Posterior vena cava (tissue), 2 donors: ENCODE measurements at regions of chr19 and their contacts with region 1.

Region 1: GRCh38 chr19:45423589-45424190 is at the start of gene ERCC1:
- DNase-seq: peak; percentile 97
- total RNA-seq, gene ERCC1: 65.0 to 68.4 TPM

Region 2: DNA sequence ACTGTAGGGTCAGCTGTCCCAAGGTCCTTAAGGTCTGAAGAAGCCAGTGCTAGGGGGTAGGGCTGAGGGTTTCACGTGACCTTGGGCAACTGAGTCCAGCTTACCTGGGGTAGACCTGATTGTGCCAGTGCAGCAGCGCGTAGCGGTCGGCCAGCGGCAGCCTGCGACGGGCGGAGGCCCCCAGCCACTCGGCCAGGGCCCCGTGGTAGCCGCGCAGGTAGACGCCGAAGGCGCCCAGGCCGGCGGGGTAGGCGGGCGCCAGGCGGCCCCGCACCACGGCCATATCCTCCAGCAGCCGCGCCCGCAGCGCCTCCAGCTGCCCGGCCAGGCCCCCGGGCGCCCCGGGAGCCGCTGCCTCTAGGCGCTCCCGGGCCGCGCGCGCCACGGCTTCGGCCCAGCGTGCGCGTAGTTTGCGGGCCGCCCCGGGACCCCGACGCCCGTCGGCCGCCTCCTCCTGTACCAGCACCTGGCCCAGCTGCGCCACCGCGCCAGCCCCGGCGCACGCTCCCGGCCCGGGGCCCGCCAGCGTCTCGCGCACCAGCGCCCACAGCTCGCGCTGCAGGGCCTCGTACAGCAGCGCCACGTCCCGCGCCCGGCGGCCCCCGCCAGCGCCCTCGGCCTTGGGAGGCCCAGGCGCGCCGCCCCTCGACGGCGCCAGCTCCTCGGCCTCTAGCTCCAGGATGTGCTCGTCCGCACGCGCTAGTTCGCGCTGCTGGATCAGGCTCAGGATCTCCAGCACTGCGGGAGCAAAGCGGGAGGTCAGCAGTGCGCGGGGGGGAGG is 189.4 kb before region 1 on chr19:
- intact Hi-C with region 1: no loop called
- DNase-seq: no peak

Region 3: GRCh38 chr19:45405435-45406225 is 18.1 kb before region 1 on chr19:
- intact Hi-C with region 1: loop called in 1 of 2 experiments (anchors 2 kb)
- DNase-seq: peak; percentile 96

Region 4: GRCh38 chr19:45451131-45451849 is 27.6 kb after region 1 on chr19:
- intact Hi-C with region 1: loop called in 1 of 2 experiments (anchors 1 kb)
- DNase-seq: peak; percentile 83

Region 5: DNA sequence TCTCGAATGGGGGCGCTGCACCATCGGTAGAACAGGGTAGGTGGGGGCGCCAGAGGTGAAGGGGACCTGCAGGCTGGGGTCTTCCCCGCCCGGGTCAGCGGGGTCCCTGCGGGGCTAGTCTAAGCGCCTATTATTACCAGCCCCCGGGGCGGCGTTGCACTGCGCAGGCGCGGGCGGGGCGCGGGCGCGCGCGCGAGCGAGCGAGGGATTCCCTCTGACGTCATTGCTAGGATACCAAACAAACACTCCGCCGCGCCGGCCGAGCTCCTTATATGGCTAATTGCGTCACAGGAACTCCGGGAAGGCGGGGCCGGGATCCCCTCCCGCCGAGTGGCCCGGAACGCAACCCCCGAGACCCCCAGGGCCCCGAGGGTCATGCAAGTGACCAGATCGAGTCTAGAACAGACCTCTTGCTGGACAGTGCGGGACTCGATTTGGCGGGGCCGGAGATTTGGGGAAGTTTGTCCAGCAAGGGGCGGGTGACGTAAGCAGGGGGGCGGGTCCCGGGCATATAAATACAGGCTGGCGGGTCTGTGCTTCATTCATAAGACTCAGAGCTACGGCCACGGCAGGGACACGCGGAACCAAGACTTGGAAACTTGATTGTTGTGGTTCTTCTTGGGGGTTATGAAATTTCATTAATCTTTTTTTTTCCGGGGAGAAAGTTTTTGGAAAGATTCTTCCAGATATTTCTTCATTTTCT is 43.9 kb after region 1 on chr19 and contains the start of gene FOSB:
- intact Hi-C with region 1: no loop called
- DNase-seq: peak; percentile 99
- total RNA-seq, gene FOSB: 33.2 to 73.0 TPM